ENCODE measurements at regions of chr18 and their contacts with region 1.

Region 1: GRCh38 chr18:8696749-8697211 is 8.6 kb upstream of the MTCL1 start:
- DNase-seq: peak; percentile 79
- ATAC-seq: peak; percentile 86
- H3K4me3 Mint-ChIP-seq: no peak overlapping the region
- H3K27ac Mint-ChIP-seq: no peak overlapping the region
- H3K4me1 Mint-ChIP-seq: no peaks in the 10 kb centered on the region
- H3K27me3 Mint-ChIP-seq: peaks cover 22% of the 10 kb centered on the region

Region 2: GRCh38 chr18:8548186-8548585 is 148.6 kb before region 1 on chr18:
- CTCF ChIA-PET with region 1: no interaction called
- POLR2A ChIA-PET with region 1: no interaction called
- DNase-seq: no peak
- ATAC-seq: no peak
- H3K4me3 Mint-ChIP-seq: no peak overlapping the region
- H3K27ac Mint-ChIP-seq: no peak overlapping the region
- H3K4me1 Mint-ChIP-seq: no peaks in the 10 kb centered on the region
- H3K27me3 Mint-ChIP-seq: peaks cover 7% of the 10 kb centered on the region

Region 3: DNA sequence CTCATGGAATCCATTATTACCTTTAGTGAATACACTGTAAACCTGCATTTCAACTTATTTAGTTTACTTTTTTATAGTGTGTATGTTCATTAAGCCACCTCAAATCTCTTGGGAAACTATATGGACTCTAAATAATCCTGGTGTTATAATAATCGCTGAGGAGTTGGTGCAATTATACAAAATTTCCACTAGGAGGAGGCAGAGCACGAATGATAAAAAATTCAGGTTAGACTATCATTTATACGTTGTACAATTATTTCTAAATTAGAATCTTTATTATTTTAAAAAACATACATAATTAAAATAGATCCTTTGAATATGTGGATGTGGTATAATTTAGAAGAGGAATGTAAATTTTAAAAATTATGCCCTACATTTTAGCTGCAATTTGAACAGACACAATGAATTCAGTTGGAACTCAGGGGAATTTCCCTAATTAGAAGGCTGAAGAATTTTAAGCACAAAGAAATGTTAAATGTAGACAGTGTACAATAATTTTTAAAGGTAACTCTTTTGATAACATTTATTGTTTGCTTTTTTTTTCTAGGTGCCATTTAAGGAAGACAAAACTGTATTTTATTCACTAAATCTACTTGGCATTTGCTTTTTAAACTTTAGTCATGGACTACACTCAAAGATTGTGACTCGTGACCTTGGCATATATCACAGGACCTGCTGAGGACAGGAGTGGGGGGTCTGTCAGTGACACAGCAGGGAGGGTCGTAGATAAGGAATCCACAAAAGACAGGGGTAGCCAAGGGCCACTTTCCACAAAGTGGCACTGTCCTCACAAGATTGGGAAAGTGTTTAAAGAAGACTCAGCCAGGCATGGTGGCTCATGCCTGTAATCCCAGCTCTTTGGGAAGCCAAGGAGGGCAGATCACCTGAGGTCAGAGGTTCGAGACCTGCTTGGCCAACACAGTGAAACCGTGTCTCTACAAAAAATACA is 42.0 kb before region 1 on chr18:
- CTCF ChIA-PET with region 1: interaction called, 10 read pairs
- POLR2A ChIA-PET with region 1: no interaction called
- DNase-seq: no peak
- ATAC-seq: no peak
- H3K4me3 Mint-ChIP-seq: no peak overlapping the region
- H3K27ac Mint-ChIP-seq: no peak overlapping the region
- H3K4me1 Mint-ChIP-seq: no peaks in the 10 kb centered on the region
- H3K27me3 Mint-ChIP-seq: peaks cover 20% of the 10 kb centered on the region

Region 4: GRCh38 chr18:8673256-8674209 is 23.2 kb before region 1 on chr18:
- CTCF ChIA-PET with region 1: interaction called, 14 read pairs
- POLR2A ChIA-PET with region 1: no interaction called
- DNase-seq: no peak
- ATAC-seq: no peak
- H3K4me3 Mint-ChIP-seq: no peak overlapping the region
- H3K27ac Mint-ChIP-seq: no peak overlapping the region
- H3K4me1 Mint-ChIP-seq: no peaks in the 10 kb centered on the region
- H3K27me3 Mint-ChIP-seq: peaks cover 2% of the 10 kb centered on the region

Region 5: GRCh38 chr18:8982416-8983184 is 285.8 kb after region 1 on chr18:
- CTCF ChIA-PET with region 1: interaction called, 32 read pairs
- POLR2A ChIA-PET with region 1: no interaction called
- DNase-seq: peak; percentile 49
- ATAC-seq: peak; percentile 51
- H3K4me3 Mint-ChIP-seq: no peak overlapping the region
- H3K27ac Mint-ChIP-seq: no peak overlapping the region
- H3K4me1 Mint-ChIP-seq: no peaks in the 10 kb centered on the region
- H3K27me3 Mint-ChIP-seq: peaks cover 8% of the 10 kb centered on the region

Region 6: DNA sequence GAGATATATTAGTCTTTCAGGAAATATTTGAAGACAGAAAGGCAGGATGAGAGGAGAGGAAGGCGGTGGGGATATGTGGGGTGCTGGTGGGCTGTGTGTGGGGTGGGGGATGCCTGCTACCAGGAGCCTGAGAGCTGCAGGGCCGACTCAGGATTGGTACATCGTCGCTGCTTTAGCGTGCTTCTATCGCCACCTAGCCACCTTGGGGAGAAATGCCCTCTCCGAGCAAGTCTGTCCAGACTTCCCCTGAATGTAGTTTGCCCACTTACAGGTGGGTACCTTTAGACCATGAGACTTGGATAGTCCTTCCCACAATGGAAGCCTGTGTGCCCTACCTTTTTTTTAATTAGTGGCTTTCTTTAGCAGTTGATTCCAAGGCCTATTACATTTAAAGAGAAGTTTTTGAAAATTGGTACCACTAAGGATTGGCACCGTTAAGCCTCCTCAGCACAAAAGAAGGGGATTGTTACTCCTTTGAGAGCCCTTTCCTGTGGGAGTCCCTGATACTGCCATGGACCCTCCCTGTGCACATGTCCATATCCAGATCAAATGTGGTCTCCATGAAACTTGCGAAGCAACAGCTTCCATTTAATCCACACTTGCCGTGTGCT is 291.6 kb after region 1 on chr18:
- CTCF ChIA-PET with region 1: interaction called, 32 read pairs
- POLR2A ChIA-PET with region 1: no interaction called
- DNase-seq: peak; percentile 71
- ATAC-seq: peak; percentile 92
- H3K4me3 Mint-ChIP-seq: no peak overlapping the region
- H3K27ac Mint-ChIP-seq: no peak overlapping the region
- H3K4me1 Mint-ChIP-seq: no peaks in the 10 kb centered on the region
- H3K27me3 Mint-ChIP-seq: peaks cover 11% of the 10 kb centered on the region

Measured in activated CD8-positive, alpha-beta T cell treated with anti-CD3 and anti-CD28 coated beads, Interleukin-2, amount 10 ng/mL, durations not matched to agents 7 days and 5 days (primary cell).